ENCODE measurements at regions of chr11 and their contacts with region 1.

Region 1: DNA sequence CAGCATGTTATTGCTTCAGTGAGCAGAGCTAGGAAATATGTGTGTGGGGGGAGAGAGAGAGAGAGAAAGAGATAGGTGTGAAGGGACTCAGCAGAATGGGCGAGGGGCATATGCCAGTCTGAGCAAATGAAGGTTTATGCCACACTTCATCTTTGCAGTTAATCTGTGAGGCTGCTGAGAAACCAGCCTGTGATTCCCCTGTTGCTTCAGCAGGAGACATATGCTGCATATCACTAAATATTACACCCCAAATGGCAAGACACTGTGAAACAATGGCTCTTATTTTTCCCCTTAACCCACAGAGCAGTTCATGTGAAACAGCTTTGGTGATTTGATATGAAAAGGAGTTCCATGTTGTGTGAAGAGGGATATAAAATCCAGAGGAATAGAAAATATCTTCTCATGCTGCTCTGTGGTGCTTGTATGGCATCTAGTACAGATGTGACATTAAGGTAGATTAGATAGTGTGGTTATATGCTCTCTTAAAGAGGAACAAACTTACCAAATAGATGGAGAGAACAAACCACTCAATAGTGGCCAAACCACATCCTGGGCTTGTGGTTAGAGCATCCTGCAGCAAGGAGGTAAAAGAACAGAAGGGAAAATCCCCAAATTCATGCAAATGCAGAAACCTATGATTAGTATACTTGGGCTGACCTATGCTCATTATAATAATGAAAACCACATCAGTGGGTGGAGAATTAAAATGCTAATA is 864.2 kb downstream of the FAM181B start:
- DNase-seq: peak; percentile 89 to 96 (median 92)
- H3K4me3 ChIP-seq: peak overlapping the region; percentile 14 to 41
- H3K4me3 Mint-ChIP-seq: peak overlapping the region; percentile 76 to 97 (median 84)
- H3K27ac ChIP-seq: peak overlapping the region; percentile 35
- H3K27ac Mint-ChIP-seq: peak overlapping the region; percentile 76 to 99 (median 95)
- H3K4me1 ChIP-seq: peaks cover 42% of the 10 kb centered on the region
- H3K4me1 Mint-ChIP-seq: peaks cover 29 to 49% (median 37%) of the 10 kb centered on the region in 4 donors
- H3K27me3 ChIP-seq: no peaks in the 10 kb centered on the region
- H3K27me3 Mint-ChIP-seq: no peaks in the 10 kb centered on the region

Region 2: DNA sequence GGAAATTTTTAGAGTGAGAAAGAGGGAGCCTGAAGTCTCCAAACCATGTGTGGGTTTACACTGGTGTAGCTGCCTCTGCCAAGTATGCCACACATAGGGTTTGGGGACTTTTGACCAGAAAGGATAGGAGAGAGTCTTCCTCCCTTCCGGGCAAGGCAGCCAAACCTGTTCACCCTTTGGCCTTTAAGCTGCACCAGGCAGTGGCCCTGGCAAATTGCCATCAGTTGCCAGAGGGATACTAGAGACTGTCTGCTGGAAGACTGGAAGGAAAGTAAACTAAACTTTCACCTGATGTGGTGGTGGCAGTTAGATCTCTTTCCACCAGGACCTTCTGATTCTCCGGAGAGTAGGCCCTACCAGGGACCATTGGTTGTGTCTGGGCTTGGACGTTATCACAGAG is 399.1 kb before region 1 on chr11:
- CTCF ChIA-PET with region 1: no interaction called
- POLR2A ChIA-PET with region 1: no interaction called
- intact Hi-C with region 1: no loop called
- DNase-seq: no peak
- H3K4me3 ChIP-seq: no peak overlapping the region
- H3K4me3 Mint-ChIP-seq: no peak overlapping the region
- H3K27ac ChIP-seq: no peak overlapping the region
- H3K27ac Mint-ChIP-seq: no peak overlapping the region
- H3K4me1 ChIP-seq: no peaks in the 10 kb centered on the region
- H3K4me1 Mint-ChIP-seq: no peaks in the 10 kb centered on the region
- H3K27me3 ChIP-seq: no peaks in the 10 kb centered on the region
- H3K27me3 Mint-ChIP-seq: no peaks in the 10 kb centered on the region

Region 3: GRCh38 chr11:81596704-81597103 is 272.8 kb before region 1 on chr11:
- CTCF ChIA-PET with region 1: no interaction called
- POLR2A ChIA-PET with region 1: no interaction called
- intact Hi-C with region 1: no loop called
- DNase-seq: no peak
- H3K4me3 ChIP-seq: no peak overlapping the region
- H3K4me3 Mint-ChIP-seq: no peak overlapping the region
- H3K27ac ChIP-seq: no peak overlapping the region
- H3K27ac Mint-ChIP-seq: no peak overlapping the region
- H3K4me1 ChIP-seq: no peaks in the 10 kb centered on the region
- H3K4me1 Mint-ChIP-seq: no peaks in the 10 kb centered on the region
- H3K27me3 ChIP-seq: no peaks in the 10 kb centered on the region
- H3K27me3 Mint-ChIP-seq: no peaks in the 10 kb centered on the region

Region 4: GRCh38 chr11:81888391-81888790 is 18.9 kb after region 1 on chr11:
- CTCF ChIA-PET with region 1: no interaction called
- POLR2A ChIA-PET with region 1: no interaction called
- intact Hi-C with region 1: no loop called
- DNase-seq: no peak
- H3K4me3 ChIP-seq: no peak overlapping the region
- H3K4me3 Mint-ChIP-seq: no peak overlapping the region
- H3K27ac ChIP-seq: no peak overlapping the region
- H3K27ac Mint-ChIP-seq: no peak overlapping the region
- H3K4me1 ChIP-seq: no peaks in the 10 kb centered on the region
- H3K4me1 Mint-ChIP-seq: no peaks in the 10 kb centered on the region
- H3K27me3 ChIP-seq: no peaks in the 10 kb centered on the region
- H3K27me3 Mint-ChIP-seq: no peaks in the 10 kb centered on the region

Region 5: GRCh38 chr11:81963018-81963417 is 93.5 kb after region 1 on chr11:
- CTCF ChIA-PET with region 1: no interaction called
- POLR2A ChIA-PET with region 1: no interaction called
- intact Hi-C with region 1: loop called (anchors 1 kb)
- DNase-seq: peak in 1 of 5 donors; percentile 2
- H3K4me3 ChIP-seq: no peak overlapping the region
- H3K4me3 Mint-ChIP-seq: peak overlapping the region in 4 of 8 donors; percentile 7 to 45 (median 30)
- H3K27ac ChIP-seq: no peak overlapping the region
- H3K27ac Mint-ChIP-seq: peak overlapping the region in 1 of 7 donors; percentile 42
- H3K4me1 ChIP-seq: peaks cover 8% of the 10 kb centered on the region
- H3K4me1 Mint-ChIP-seq: peaks cover 5 to 19% (median 12%) of the 10 kb centered on the region in 4 donors
- H3K27me3 ChIP-seq: no peaks in the 10 kb centered on the region
- H3K27me3 Mint-ChIP-seq: no peaks in the 10 kb centered on the region

Region 6: GRCh38 chr11:83285771-83286528 is 1416.4 kb after region 1 on chr11 and contains the start of gene CCDC90B:
- CTCF ChIA-PET with region 1: no interaction called
- POLR2A ChIA-PET with region 1: no interaction called
- intact Hi-C with region 1: loop called (anchors 5 kb)
- DNase-seq: peak; percentile 95 to 97 (median 97)
- H3K4me3 ChIP-seq: peak within 1 kb of the TSS; percentile 89 to 92
- H3K4me3 Mint-ChIP-seq: peak within 1 kb of the TSS; percentile 94 to 99 (median 98)
- H3K27ac ChIP-seq: peak within 1 kb of the TSS; percentile 95
- H3K27ac Mint-ChIP-seq: peak within 1 kb of the TSS; percentile 98 to 100 (median 100)
- H3K4me1 ChIP-seq: peaks cover 42% of the 10 kb centered on the region
- H3K4me1 Mint-ChIP-seq: peaks cover 26 to 46% (median 34%) of the 10 kb centered on the region in 4 donors
- H3K27me3 ChIP-seq: no peaks in the 10 kb centered on the region
- H3K27me3 Mint-ChIP-seq: no peaks in the 10 kb centered on the region
- total RNA-seq, gene CCDC90B: 37.6 to 38.0 TPM